Activated T-helper 1 cell treated with anti-CD3 and anti-CD28 coated beads, Interleukin-12 subunit alpha, Interleukin-12 subunit beta, Interleukin-2, Interleukin-4 antibody, amounts not matched to agents 30 ng/mL and 10 ng/mL and 1 ng/mL, durations not matched to agents 14 hours and 24 hours and 36 hours (primary cell): ENCODE measurements at regions of chr15 and their contacts with region 1.

Region 1: DNA sequence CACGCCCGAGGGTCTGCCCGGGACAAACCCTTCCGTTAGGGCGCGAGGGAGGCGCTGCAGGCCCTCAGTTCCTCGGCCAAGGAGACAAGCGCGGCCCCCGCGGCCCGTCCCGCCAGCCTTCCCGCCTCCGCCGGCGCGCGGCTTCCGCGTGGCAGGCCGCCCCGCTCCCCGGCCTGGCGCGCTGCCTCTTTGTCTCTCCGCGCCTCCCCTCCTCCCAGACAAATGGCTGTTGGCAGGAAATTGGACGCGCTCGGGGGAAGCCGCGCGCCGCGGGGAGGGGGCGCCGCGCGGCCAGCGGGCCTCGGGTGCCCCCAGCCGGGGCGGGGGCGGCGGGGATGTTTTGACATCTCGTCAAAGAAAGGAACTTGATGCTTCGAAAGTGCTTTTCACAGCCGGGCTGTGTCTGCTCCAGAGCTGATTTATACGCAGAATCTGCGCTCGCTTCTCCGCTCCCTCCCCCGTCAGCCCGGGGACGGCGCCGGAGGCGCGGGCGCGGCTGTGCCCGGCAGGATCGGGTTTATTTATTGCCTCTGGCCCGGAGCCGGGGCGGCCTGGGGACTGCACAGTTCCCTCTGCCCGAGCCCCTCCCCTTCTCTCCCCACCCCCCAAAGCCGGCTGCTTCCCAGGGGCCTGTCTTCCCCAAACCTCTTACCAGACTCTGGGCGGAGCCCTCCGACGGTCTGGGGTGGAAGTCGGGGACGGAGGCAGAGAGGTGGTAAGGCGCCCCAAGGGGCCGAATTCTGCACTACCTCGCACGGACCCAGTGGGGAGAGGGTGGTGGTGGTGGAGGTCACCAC is 20.7 kb downstream of the SHF start:
- DNase-seq: peak; percentile 77
- H3K4me3 Mint-ChIP-seq: peak overlapping the region; percentile 75
- H3K27ac Mint-ChIP-seq: peak overlapping the region; percentile 81
- H3K4me1 Mint-ChIP-seq: peaks cover 21% of the 10 kb centered on the region
- H3K27me3 Mint-ChIP-seq: no peaks in the 10 kb centered on the region

Region 2: DNA sequence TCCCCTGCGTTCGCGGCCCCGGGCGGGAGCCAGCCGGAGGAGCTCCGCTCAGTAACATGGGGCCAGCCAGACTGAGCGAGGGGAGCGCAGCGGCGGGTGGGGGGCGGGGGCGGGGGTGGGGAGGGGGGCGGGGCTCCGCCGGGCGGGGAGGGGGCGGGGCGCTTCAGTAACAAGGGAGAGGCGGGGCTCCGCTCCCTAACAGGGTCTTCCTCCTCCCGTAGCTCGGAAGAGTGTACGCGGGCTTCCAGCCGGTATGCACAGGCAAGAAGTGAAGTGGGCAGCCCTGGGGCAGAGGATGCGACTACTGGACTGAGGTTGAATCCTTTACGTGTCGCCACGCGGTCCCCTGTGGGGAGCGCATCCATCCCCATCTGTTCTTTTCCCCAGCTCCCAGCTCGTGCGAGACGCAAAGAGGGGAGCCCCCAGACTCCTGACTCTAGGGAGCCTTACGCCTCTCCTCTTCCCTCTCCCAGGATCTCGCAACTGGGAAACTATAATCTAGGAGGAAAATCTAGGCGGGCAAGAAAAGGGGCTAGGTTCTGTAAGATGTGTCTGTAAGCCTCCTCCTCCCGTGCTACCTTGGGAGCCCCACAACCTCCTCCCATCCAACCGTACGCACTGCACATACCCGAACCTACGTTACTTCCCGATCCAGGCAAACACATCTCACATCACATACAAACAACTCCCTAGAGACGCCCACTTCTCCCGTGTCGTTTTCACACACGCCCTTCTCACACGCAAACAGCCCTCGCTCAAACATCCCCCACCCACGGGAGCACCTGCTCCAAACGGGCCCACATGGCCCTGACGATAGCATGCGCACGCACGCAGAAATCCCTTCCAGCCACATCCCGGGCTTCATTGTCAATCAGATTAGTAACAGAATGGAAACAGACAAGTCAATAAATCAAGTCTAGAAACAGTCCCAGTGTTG is 21.1 kb after region 1 on chr15 and contains the start of gene SHF:
- intact Hi-C with region 1: loop called (anchors 1 kb)
- DNase-seq: peak; percentile 36
- H3K4me3 Mint-ChIP-seq: peak within 1 kb of the TSS; percentile 94
- H3K27ac Mint-ChIP-seq: peak within 1 kb of the TSS; percentile 98
- H3K4me1 Mint-ChIP-seq: peaks cover 33% of the 10 kb centered on the region
- H3K27me3 Mint-ChIP-seq: peaks cover 7% of the 10 kb centered on the region
- total RNA-seq, gene SHF: 14.5 and 16.3 TPM in 2 replicates

Region 3: DNA sequence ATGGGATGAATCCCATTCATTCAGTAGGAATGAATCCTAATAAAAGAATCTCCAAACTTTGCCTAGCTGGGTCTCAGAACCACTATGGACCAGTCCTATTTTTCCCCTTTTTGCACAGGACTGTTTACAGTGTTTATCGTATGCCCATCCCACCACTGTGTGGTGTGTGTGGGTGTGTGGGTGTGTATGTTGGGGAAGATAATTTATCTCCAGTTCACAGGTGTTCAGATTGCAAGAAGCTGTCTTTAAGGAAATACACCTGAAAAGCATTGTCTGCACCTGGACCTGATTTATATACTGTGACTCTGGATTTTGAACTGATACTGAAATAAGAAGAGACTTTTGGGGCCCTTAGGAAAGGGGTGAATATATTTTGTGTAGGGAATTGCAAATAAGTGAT is 45.5 kb after region 1 on chr15:
- intact Hi-C with region 1: loop called (anchors 2 kb)
- DNase-seq: no peak
- H3K4me3 Mint-ChIP-seq: no peak overlapping the region
- H3K27ac Mint-ChIP-seq: no peak overlapping the region
- H3K4me1 Mint-ChIP-seq: no peaks in the 10 kb centered on the region
- H3K27me3 Mint-ChIP-seq: peaks cover 7% of the 10 kb centered on the region

Region 4: DNA sequence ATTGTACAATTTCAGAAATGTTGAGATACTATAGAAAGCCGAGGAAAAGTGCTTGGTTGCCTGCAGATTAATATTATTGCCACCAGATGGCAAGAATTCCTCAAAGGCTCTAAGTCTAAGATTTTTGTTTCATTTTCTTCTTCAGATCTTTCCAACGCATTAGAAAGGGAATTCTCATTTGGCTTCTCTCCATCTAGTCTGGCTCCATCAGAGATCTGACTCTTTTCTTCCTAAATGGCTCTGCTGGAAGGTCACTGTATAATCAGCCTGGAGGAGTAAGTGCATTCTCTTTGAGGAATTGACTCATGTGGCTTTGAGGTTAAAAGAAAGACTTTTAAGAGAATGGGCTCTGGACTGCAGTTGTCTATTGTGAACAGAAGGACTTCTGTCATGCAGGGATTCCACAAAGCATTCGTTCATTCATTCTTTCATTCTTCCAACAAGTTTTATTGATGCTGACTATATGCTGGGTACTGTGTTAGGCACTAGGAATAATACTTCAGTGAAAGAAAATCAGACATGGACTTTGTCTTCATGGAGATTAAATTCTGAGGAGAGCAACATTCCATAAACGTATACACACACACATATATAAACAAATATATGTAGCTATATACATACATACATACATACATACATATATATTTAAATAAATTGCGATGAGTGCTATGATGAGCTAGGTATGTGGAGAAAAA is 140.3 kb after region 1 on chr15:
- intact Hi-C with region 1: no loop called
- DNase-seq: no peak
- H3K4me3 Mint-ChIP-seq: no peak overlapping the region
- H3K27ac Mint-ChIP-seq: no peak overlapping the region
- H3K4me1 Mint-ChIP-seq: peaks cover 5% of the 10 kb centered on the region
- H3K27me3 Mint-ChIP-seq: peaks cover 27% of the 10 kb centered on the region